Activated CD4-positive, alpha-beta memory T cell treated with anti-CD3 and anti-CD28 coated beads, Interleukin-2, amount 10 ng/mL, durations not matched to agents 7 days and 5 days (primary cell): ENCODE measurements at regions of chr20 and their contacts with region 1.

Region 1: GRCh38 chr20:53869466-53870258 is 200.7 kb downstream of the BCAS1 start:
- DNase-seq: peak; percentile 76
- H3K4me3 Mint-ChIP-seq: peak overlapping the region; percentile 22
- H3K27ac Mint-ChIP-seq: peak overlapping the region; percentile 84
- H3K4me1 Mint-ChIP-seq: peaks cover 79% of the 10 kb centered on the region
- H3K27me3 Mint-ChIP-seq: no peaks in the 10 kb centered on the region

Region 2: GRCh38 chr20:53594068-53595017 is 275.3 kb before region 1 on chr20:
- CTCF ChIA-PET with region 1: interaction called, 3 read pairs
- POLR2A ChIA-PET with region 1: interaction called, 29 read pairs
- DNase-seq: peak; percentile 97
- H3K4me3 Mint-ChIP-seq: peak overlapping the region; percentile 99
- H3K27ac Mint-ChIP-seq: peak overlapping the region; percentile 95
- H3K4me1 Mint-ChIP-seq: peaks cover 44% of the 10 kb centered on the region
- H3K27me3 Mint-ChIP-seq: no peaks in the 10 kb centered on the region

Region 3: DNA sequence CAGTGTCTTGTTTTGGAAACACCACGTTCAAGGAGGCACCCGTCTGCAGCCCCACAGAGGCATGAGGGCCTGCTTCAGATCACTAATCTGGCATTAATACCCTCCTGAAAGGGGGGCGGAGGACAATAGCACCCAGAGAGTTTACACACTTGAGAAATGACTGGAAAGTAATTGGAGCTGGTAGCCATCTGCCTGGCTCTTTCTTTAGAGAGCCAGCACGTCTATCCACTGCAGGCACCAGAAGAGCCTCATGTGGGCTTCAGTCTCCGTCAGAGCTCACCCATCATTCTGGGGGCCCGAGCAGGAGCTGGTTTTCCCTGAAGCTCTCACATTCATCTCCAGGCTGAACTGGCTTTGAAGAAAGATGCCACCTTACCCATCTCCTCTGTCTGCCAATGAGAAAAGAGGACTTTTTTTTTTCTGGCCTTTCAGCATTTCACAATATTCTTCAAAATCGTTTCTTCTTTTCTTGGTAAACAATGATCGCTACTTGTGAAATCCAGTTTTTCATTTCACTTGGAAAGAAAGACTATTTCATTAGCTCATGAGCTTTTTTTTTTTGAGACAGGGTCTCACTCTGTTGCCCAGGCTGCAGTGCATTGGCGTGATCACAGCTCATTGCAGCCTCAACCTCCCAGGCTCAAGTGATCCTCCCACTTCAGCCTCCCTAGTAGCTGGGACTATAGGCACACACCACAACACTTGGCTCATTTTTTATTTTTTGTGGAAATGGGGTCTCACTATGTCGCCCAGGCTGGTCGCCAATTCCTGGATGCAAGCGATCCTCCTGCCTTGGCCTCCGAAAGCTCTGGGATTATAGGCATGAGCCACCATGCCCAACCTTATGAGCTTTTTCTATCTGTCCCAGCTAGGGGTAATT is 151.3 kb before region 1 on chr20:
- CTCF ChIA-PET with region 1: no interaction called
- POLR2A ChIA-PET with region 1: no interaction called
- DNase-seq: no peak
- H3K4me3 Mint-ChIP-seq: no peak overlapping the region
- H3K27ac Mint-ChIP-seq: no peak overlapping the region
- H3K4me1 Mint-ChIP-seq: peaks cover 17% of the 10 kb centered on the region
- H3K27me3 Mint-ChIP-seq: no peaks in the 10 kb centered on the region

Region 4: GRCh38 chr20:53750827-53751619 is 118.6 kb before region 1 on chr20:
- CTCF ChIA-PET with region 1: interaction called, 4 read pairs
- POLR2A ChIA-PET with region 1: interaction called, 11 read pairs
- DNase-seq: peak; percentile 56
- H3K4me3 Mint-ChIP-seq: peak overlapping the region; percentile 16
- H3K27ac Mint-ChIP-seq: peak overlapping the region; percentile 96
- H3K4me1 Mint-ChIP-seq: peaks cover 69% of the 10 kb centered on the region
- H3K27me3 Mint-ChIP-seq: no peaks in the 10 kb centered on the region

Region 5: GRCh38 chr20:53763707-53764414 is 105.8 kb before region 1 on chr20:
- CTCF ChIA-PET with region 1: no interaction called
- POLR2A ChIA-PET with region 1: no interaction called
- DNase-seq: no peak
- H3K4me3 Mint-ChIP-seq: no peak overlapping the region
- H3K27ac Mint-ChIP-seq: no peak overlapping the region
- H3K4me1 Mint-ChIP-seq: peaks cover 13% of the 10 kb centered on the region
- H3K27me3 Mint-ChIP-seq: no peaks in the 10 kb centered on the region

Region 6: DNA sequence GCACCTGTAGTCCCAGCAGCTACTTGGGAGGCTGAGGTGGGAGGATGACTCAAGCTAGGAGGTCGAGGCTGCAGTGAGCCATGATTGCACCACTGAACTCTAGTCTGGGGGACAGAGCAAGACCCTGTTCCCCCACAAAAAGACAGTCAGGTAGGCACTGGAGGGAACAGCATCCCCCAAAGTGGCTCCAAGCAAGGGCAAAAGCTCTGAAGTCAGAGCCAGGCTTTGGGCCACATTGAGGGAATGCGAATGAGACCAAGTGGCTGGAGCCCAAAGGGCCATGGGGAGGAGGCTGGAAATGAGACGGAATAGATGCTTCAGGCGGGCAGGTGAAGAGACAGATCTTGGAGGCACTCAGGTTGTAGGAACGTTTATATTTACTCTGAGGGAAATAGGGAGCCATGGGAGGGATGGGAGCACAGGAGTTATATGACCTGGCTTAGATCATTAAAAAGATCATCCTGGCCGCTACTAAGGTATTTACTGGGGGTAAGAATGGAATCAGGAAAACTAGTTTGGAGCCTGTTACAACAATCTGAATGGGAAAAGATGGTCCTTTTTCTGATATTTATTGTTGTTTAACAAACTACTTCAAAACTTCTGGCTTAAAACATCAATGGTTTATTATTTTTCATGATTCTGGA is 46.4 kb before region 1 on chr20:
- CTCF ChIA-PET with region 1: no interaction called
- POLR2A ChIA-PET with region 1: no interaction called
- DNase-seq: no peak
- H3K4me3 Mint-ChIP-seq: no peak overlapping the region
- H3K27ac Mint-ChIP-seq: no peak overlapping the region
- H3K4me1 Mint-ChIP-seq: peaks cover 10% of the 10 kb centered on the region
- H3K27me3 Mint-ChIP-seq: no peaks in the 10 kb centered on the region

Region 7: DNA sequence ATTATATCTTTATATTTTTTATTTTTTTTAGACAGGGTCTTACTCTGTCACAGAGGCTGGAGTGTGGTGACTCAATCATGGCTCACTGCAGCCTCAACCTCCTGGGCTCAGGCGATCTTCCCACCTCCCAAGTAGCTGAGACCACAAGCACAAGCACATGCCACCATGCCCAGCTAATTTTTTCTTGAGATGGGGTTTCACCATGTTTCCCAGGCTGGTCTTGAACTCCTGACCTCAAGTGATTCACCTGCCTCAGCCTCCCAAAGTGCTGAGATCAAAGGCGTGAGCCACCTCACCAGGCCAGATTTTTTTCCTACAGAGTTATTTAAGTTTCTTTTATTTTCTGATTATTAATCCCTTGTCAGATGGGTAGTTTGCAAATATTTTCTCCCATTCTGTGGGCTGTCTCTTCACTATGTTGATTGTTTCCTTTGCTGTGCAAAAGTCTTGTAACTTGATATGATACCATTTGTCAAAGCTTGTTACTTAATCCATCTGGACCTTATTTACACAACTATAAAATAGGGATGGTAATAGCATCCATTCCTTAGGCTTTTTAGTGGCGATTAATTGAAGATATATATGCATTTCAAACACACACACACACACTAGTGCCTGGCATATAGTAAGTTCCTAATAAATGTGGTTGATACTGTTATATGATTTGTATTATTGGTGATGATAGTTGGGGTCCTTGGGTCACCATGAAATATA is 13.6 kb after region 1 on chr20:
- CTCF ChIA-PET with region 1: interaction called, 17 read pairs
- POLR2A ChIA-PET with region 1: interaction called, 28 read pairs
- DNase-seq: no peak
- H3K4me3 Mint-ChIP-seq: no peak overlapping the region
- H3K27ac Mint-ChIP-seq: no peak overlapping the region
- H3K4me1 Mint-ChIP-seq: peaks cover 43% of the 10 kb centered on the region
- H3K27me3 Mint-ChIP-seq: no peaks in the 10 kb centered on the region

Region 8: GRCh38 chr20:53899351-53900167 is 29.9 kb after region 1 on chr20:
- CTCF ChIA-PET with region 1: interaction called, 4 read pairs
- POLR2A ChIA-PET with region 1: interaction called, 15 read pairs
- DNase-seq: peak; percentile 87
- H3K4me3 Mint-ChIP-seq: no peak overlapping the region
- H3K27ac Mint-ChIP-seq: peak overlapping the region; percentile 78
- H3K4me1 Mint-ChIP-seq: peaks cover 54% of the 10 kb centered on the region
- H3K27me3 Mint-ChIP-seq: no peaks in the 10 kb centered on the region

Region 9: DNA sequence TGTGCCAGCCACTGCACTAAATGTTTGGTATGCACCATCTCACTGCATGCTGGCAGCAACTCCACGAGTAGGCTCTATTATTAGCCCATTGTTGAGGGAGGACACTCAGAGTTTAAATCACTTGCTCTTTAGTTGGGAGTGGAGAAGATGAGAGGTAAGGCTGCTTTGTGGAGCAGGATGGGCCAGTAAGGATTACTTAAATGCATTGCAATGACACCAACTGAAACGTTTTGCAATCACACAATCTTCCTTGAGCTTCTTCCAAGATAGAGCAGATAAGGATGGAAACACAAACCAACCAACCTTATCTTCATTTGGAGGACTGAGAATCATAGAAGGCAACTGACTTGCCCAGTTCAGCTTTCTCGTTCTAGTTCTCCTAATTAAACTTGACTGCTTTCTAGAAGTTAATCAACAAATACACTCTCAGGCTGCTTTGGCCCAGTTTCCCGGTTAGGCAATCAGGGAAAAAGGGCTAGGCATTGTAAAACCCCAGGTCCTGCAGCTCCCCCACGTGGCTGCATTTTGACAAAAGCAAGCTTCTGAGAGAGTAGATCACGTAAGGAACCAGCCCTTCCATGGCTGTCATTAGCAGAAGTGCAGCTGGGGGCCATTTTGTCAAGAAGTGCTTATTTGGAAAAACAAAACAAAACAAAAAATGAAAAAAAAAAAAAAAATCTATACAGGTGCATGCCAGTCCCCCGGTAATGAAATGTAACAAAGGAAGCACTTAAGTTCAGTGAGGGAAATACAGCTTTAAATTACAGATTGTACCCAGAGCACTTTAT is 70.1 kb after region 1 on chr20:
- CTCF ChIA-PET with region 1: interaction called, 10 read pairs
- POLR2A ChIA-PET with region 1: interaction called, 7 read pairs
- DNase-seq: peak; percentile 81
- H3K4me3 Mint-ChIP-seq: no peak overlapping the region
- H3K27ac Mint-ChIP-seq: no peak overlapping the region
- H3K4me1 Mint-ChIP-seq: peaks cover 39% of the 10 kb centered on the region
- H3K27me3 Mint-ChIP-seq: no peaks in the 10 kb centered on the region

Region 10: GRCh38 chr20:53960579-53961272 is 91.1 kb after region 1 on chr20:
- CTCF ChIA-PET with region 1: no interaction called
- POLR2A ChIA-PET with region 1: no interaction called
- DNase-seq: no peak
- H3K4me3 Mint-ChIP-seq: no peak overlapping the region
- H3K27ac Mint-ChIP-seq: no peak overlapping the region
- H3K4me1 Mint-ChIP-seq: peaks cover 4% of the 10 kb centered on the region
- H3K27me3 Mint-ChIP-seq: peaks cover 33% of the 10 kb centered on the region